PC-3 (cell line): ENCODE measurements at regions of chr14 and their contacts with region 1.

Region 1: DNA sequence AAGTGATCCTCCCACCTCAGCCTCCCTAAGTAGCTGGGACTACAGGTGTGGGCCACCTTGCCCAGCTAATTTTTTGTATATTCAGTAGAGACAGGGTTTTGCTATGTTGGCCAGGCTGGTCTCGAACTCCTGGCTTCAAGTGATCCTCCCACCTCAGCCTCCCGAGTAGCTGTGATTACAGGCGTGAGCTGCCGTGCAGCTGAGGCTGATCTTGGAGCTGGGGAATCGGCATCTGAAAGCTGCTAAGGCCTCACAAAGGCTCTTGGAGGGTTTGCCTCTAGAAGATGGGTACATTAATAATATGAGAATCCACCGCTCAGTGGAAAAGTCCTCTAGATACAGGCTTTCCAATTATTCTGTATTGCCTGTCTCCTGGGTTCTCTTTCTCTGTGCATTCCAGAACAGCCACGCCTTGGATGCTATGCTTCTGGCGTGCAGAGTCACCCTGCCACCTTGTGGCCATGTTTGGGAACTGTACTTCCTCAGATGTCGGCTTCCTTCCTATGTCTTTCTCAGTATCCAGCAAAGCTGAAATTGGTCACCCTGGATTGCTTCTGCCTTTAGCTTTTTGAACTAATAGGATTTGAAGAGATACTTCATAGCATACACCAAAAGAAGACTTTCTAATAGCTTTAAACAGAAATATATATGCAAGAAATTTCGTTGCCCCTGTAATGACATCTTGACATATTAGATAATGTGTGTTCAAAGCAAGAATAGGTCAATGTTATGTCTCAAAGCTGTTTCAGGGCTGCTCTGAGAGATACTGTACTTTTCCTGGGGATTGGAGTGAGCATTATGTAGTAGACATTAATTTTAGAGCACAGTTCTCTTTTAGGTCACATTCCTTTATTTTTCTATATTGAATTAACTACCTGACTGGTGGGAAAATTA is 75.4 kb downstream of the SNAPC1 start:
- DNase-seq: peak; percentile 97
- ATAC-seq: peak; percentile 85
- H3K4me3 ChIP-seq: no peak overlapping the region
- H3K27ac ChIP-seq: peak overlapping the region; percentile 73
- H3K4me1 ChIP-seq: peaks cover 29% of the 10 kb centered on the region
- H3K27me3 ChIP-seq: no peaks in the 10 kb centered on the region
- CTCF ChIP-seq: peak; percentile 98

Region 2: DNA sequence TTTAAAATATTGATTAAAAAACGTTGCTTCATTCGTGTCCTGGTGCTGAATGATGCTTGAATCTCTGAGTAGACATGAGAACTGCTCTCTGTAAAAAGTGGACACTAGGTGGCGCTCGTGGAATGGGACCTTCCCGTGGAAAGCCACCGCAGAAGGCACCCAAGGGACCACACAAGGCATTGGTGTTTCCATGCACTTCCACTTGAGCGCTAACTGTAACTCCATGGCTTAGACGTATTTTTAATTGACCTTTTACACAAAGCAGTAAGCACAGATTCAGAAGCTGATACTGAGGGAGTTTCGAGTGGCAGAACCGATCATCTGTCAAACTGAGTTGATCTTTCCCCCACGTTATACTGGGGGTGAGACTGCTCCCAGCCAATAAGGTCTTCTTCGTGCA is 380.9 kb before region 1 on chr14:
- CTCF ChIA-PET with region 1: no interaction called
- POLR2A ChIA-PET with region 1: no interaction called
- intact Hi-C with region 1: loop called (anchors 1 kb)
- DNase-seq: peak; percentile 95
- ATAC-seq: peak; percentile 88
- H3K4me3 ChIP-seq: no peak overlapping the region
- H3K27ac ChIP-seq: no peak overlapping the region
- H3K4me1 ChIP-seq: peaks cover 13% of the 10 kb centered on the region
- H3K27me3 ChIP-seq: no peaks in the 10 kb centered on the region
- CTCF ChIP-seq: peak; percentile 96

Region 3: DNA sequence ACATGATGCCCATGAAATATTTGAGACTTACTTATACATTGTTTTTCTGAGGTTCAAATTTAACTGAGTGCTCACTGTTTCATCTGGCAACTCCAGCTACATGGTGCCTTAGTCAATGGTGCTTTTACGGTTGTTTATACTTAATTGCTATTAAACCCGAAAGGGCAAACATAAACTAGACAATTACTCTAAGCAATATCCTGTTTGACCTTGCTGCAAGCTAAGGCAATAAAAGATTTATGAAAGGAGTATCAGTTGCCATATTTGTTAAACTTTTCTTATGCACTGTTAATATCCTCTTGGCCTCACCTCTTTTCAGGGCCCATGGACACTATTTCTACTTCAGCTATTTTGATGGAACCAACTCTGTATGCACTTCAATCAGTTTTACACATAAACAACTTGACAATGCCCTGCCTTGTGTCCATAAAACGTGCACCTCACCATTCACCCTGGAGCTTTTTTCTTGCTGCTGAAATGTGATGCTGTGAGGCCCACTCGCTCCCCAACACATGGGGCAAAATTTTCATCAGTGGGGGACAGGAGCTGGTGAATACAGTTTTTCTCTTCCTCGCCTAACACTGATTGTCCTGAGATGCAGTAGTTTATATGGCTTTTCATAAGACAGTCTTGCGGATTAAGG is 206.4 kb before region 1 on chr14:
- CTCF ChIA-PET with region 1: no interaction called
- POLR2A ChIA-PET with region 1: no interaction called
- intact Hi-C with region 1: loop called (anchors 5 kb)
- DNase-seq: peak; percentile 34
- ATAC-seq: peak; percentile 81
- H3K4me3 ChIP-seq: no peak overlapping the region
- H3K27ac ChIP-seq: peak overlapping the region; percentile 15
- H3K4me1 ChIP-seq: peaks cover 17% of the 10 kb centered on the region
- H3K27me3 ChIP-seq: no peaks in the 10 kb centered on the region
- CTCF ChIP-seq: no peak

Region 4: DNA sequence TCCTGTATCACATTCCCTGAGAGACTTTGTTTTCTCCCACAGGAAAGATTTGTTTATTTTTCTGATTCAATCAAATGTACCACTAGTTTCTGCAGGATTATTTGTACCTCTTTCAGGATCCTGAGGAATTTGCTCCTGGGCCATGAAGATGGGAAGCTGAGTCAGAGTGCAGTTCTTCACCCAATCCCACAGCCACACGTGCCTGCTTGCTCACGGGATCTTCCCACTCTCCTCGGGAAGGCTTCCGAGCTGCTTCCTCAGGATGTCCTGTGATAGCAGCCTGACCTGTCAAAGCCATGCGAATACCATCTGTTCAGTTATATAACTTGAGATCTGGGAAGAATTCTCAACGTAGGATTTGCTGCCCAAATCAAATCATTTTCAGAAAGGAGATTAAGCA is 184.1 kb before region 1 on chr14:
- CTCF ChIA-PET with region 1: no interaction called
- POLR2A ChIA-PET with region 1: no interaction called
- intact Hi-C with region 1: no loop called
- DNase-seq: peak; percentile 94
- ATAC-seq: peak; percentile 82
- H3K4me3 ChIP-seq: peak overlapping the region; percentile 2; the same call in 1 of the 2 replicates
- H3K27ac ChIP-seq: peak overlapping the region; percentile 67
- H3K4me1 ChIP-seq: peaks cover 50% of the 10 kb centered on the region
- H3K27me3 ChIP-seq: no peaks in the 10 kb centered on the region
- CTCF ChIP-seq: no peak

Region 5: GRCh38 chr14:61750708-61751474 is 86.7 kb before region 1 on chr14:
- CTCF ChIA-PET with region 1: interaction called, 4 read pairs
- POLR2A ChIA-PET with region 1: no interaction called
- intact Hi-C with region 1: loop called (anchors 1 kb)
- DNase-seq: peak; percentile 99
- ATAC-seq: peak; percentile 79
- H3K4me3 ChIP-seq: peak overlapping the region; percentile 72
- H3K27ac ChIP-seq: peak overlapping the region; percentile 55
- H3K4me1 ChIP-seq: peaks cover 79% of the 10 kb centered on the region
- H3K27me3 ChIP-seq: no peaks in the 10 kb centered on the region
- CTCF ChIP-seq: no peak

Region 6: GRCh38 chr14:61803755-61804154 is 33.8 kb before region 1 on chr14:
- CTCF ChIA-PET with region 1: interaction called, 9 read pairs
- POLR2A ChIA-PET with region 1: no interaction called
- intact Hi-C with region 1: loop called (anchors 2 kb)
- DNase-seq: no peak
- ATAC-seq: no peak
- H3K4me3 ChIP-seq: no peak overlapping the region
- H3K27ac ChIP-seq: no peak overlapping the region
- H3K4me1 ChIP-seq: no peaks in the 10 kb centered on the region
- H3K27me3 ChIP-seq: no peaks in the 10 kb centered on the region
- CTCF ChIP-seq: no peak

Region 7: DNA sequence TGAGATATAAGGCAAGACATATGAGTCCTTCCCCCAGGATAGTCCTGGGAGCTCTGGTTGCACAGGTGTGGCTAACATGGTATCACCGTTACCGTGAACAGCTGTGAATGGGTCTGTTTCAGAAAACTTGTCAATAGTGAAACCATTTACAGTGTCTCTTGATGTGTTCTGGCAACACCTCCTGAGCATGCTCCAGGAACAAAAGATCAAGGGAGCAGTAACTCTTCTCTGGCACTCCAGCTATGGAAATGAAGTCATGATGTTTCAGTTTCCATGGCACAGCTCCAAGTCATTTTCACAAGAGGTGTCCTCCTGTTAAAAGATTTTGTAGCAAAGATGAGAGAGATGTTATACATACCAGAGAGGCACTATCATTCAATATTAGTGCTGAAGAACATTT is 178.4 kb after region 1 on chr14:
- CTCF ChIA-PET with region 1: no interaction called
- POLR2A ChIA-PET with region 1: interaction called, 16 read pairs
- intact Hi-C with region 1: no loop called
- DNase-seq: peak; percentile 35
- ATAC-seq: peak; percentile 20
- H3K4me3 ChIP-seq: no peak overlapping the region
- H3K27ac ChIP-seq: no peak overlapping the region
- H3K4me1 ChIP-seq: peaks cover 8% of the 10 kb centered on the region; the same call in 1 of the 2 replicates
- H3K27me3 ChIP-seq: no peaks in the 10 kb centered on the region
- CTCF ChIP-seq: no peak